GM13977 (cell line): ENCODE measurements at regions of chr1 and their contacts with region 1.

Region 1: GRCh38 chr1:157193702-157194391 is 55.7 kb upstream of the ETV3 start:
- DNase-seq: peak; percentile 70
- CTCF ChIP-seq: peak; percentile 80

Region 2: GRCh38 chr1:156813750-156814570 is 379.9 kb before region 1 on chr1:
- in situ Hi-C with region 1: no loop called
- DNase-seq: peak; percentile 65
- CTCF ChIP-seq: peak; percentile 62

Region 3: DNA sequence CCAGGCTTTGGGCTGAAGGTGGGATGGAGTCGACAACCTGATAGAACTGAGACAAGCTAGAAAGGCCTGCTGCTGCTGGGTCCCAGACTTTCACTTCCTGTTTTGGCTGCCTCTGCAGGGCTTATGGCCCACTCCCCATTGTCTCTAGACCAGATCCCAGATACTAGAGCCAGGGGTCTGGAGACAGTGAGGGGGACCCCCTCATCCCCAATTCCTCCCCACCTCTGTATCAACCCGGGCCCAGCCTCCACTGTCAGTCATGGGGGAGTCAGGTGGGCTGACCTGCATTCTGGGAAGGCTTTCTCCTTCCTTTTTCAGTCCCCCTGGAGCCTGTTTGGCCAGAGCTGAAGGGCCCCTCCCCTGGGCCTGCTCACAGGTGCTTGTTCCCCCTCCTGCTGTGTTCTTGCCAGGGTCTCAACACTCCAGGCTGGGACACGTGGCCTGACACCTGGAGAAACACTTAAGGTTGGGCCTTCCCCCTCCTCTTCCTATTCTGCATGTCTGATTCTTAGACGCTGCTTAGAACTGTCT is 76.3 kb before region 1 on chr1:
- in situ Hi-C with region 1: no loop called
- DNase-seq: peak; percentile 60
- CTCF ChIP-seq: no peak

Region 4: DNA sequence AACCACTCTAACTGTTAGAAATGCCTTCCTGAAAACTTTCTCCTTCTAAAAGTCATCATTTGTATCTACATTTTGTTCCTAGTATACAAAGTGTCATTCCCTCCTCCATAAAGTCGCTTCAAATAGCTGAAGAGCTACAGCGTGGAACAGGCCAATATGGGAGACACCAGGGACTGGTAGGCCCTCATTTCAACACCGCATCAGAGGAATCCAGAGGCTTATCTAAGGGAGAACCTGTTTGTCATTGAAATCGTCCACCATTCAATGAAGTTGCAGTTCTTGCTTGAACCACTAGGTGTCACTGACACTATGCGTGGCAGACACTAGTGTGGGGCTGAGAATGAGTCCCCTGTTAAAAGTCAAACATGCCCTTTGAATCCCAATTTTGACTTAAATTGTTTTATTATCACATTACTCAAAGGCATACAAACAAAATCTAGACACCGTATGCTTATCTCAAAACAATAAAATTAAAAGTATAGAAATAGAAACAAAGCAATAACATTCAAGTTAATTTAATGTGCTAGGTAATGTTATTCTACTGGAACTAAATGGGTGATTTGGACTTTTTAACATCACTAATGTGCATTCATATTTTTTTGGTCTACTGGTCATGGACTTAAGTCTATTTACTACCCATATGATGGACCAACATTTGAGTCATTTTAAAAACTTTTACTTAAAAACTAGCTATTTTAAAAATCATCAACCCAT is 176.1 kb after region 1 on chr1:
- in situ Hi-C with region 1: loop called (anchors 25 kb)
- DNase-seq: peak; percentile 47
- CTCF ChIP-seq: peak; percentile 80